Esophagus muscularis mucosa (tissue), 4 donors: ENCODE measurements at regions of chr7 and their contacts with region 1.

Region 1: DNA sequence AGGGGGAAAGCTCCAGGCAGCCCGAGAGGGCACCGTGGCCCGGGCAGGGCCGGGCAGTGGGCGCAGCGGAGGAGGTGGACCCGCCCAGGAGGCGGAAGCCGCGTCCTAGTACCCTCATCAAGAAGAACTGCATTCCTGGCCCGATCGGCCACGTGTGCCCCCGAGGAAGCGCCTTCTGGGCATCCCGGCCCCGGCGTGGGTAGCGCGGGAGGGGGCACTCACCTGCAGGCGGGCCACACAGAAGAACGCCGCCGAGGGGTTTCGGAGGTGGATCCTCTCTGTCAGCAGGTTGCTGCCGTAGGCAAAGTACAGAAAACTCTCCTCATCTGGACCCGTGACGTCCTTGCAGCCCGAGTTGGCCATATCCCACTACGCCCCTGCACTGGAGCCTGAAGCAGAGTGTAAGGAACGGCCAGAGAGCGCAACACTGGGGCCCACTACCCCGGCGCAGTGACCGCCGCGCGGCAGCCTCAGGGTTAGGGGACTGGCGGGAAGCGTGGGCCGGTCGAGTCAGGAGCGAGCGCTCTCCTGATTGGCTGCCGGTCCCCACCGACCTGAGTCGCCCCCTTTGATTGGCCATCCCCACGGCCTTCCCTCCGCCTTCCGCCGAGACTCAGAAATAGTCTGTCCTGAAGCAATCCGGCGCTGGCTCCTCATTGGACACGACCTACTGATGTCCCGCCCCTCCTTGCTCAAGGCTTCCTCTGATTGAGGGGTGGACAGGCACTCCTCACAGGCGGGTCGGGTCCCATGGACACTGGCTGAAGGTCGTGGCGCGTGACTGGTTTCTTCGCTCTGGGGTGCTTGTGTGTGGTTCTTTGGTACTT is at the start of gene GGCT:
- DNase-seq: peak; percentile 100
- H3K4me3 ChIP-seq: peak within 1 kb of the TSS; percentile 83 to 96 (median 88)
- H3K27ac ChIP-seq: peak within 1 kb of the TSS; percentile 81 to 93 (median 86)
- H3K4me1 ChIP-seq: peaks cover 17 to 34% (median 24%) of the 10 kb centered on the region in 4 donors
- H3K27me3 ChIP-seq: no peaks in the 10 kb centered on the region
- CTCF ChIP-seq: no peak
- EP300 ChIP-seq: no peak
- POLR2A ChIP-seq: peak; percentile 13
- total RNA-seq, gene GGCT: 10.8 to 39.9 (median 17.8) TPM

Region 2: GRCh38 chr7:30459591-30460257 is 44.8 kb before region 1 on chr7:
- intact Hi-C with region 1: loop called (anchors 2 kb)
- DNase-seq: no peak
- H3K4me3 ChIP-seq: peak overlapping the region in 3 of 4 donors; percentile 19 to 40 (median 25)
- H3K27ac ChIP-seq: peak overlapping the region; percentile 73 to 80 (median 79)
- H3K4me1 ChIP-seq: peaks cover 36 to 60% (median 56%) of the 10 kb centered on the region in 4 donors
- H3K27me3 ChIP-seq: no peaks in the 10 kb centered on the region
- CTCF ChIP-seq: no peak
- EP300 ChIP-seq: peak; percentile 90
- POLR2A ChIP-seq: no peak

Region 3: DNA sequence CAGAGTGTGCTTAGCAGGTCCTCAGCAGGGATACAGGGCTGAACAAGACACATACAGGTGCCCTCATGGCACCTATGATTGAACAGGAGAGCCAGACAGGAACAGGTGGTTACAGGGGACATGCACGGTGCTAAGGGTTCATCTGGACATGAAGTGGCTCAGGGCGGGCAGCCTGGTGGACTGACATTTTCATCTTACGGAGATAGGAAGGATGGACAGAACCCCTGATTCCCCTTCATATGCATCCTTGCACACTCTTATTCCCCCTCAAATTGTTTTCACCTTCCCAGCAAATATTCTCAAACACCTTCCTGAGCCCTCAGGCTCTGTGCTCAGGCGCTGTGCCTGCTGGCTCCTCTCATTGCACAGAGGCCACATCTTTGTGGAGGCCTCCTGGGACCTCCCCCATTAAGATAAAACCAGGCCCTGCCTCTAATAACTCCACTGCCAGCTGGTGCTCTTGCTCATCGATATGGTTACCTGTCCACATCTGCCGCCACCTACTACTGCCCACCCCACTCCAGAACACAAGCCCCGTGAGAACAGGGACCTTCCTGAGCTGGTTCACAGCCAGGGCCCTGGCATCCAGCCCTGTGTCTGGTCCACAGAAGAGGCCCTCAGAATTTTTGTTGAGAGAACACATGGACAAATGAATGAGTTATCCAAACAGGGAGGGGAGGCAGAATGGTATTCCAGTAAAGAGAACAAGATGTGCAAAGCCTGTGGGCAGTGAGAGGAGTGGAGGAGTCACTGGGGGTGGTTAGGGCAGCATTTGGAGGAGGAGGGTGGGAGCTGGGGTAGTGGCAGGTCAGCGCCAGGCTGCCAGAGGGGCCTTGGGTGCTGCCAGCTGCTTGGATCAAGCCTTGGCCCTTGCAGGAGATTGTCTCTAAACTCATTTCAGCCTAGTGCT is 338.2 kb after region 1 on chr7:
- intact Hi-C with region 1: no loop called
- DNase-seq: no peak
- H3K4me3 ChIP-seq: no peak overlapping the region
- H3K27ac ChIP-seq: peak overlapping the region; percentile 88 to 95 (median 90)
- H3K4me1 ChIP-seq: peaks cover 43 to 72% (median 68%) of the 10 kb centered on the region in 4 donors
- H3K27me3 ChIP-seq: no peaks in the 10 kb centered on the region
- CTCF ChIP-seq: no peak
- EP300 ChIP-seq: no peak
- POLR2A ChIP-seq: no peak